Activated T-helper 2 cell treated with anti-CD3 and anti-CD28 coated beads, Interferon-gamma antibody, Interleukin-2, Interleukin-4, amounts not matched to agents 10 μg/mL and 5 μg/mL and 100 μg/mL, durations not matched to agents 14 hours and 24 hours and 36 hours (primary cell): ENCODE measurements at regions of chr5 and their contacts with region 1.

Region 1: DNA sequence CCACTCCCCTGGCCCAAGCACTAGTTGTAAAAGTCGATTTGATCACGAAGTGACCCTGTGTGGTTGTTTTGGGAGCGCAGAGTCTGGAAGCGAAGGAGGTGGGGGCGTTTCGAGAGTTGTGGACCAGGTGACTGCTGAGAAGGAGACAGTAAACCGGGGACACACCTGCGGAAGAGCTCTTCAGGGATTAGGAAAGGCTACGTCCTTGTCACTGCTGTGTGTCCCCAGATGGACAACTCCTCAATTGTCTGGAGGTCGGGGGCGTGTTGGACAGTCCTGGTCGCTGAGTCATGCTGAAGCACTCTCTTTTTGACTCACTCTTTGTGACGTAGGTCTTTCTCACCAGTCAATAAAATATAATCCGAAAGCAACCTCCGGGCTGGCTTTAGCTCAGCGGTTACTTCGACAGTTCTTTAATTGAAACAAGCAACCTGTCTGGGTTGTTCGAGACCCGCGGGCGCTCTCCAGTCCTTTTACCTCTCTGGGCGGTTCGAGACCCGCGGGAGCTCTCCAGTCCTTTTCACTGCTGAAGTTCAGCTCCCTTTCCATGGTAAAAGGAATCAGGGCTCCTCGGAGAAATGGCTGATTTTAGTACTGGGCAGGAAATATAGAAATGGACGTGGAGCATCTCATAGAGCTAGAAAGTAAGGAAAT is 10.8 kb downstream of the ZMAT2 start:
- DNase-seq: peak; percentile 88
- H3K4me3 Mint-ChIP-seq: peak overlapping the region; percentile 89
- H3K27ac Mint-ChIP-seq: peak overlapping the region; percentile 91
- H3K4me1 Mint-ChIP-seq: peaks cover 16% of the 10 kb centered on the region
- H3K27me3 Mint-ChIP-seq: no peaks in the 10 kb centered on the region

Region 2: DNA sequence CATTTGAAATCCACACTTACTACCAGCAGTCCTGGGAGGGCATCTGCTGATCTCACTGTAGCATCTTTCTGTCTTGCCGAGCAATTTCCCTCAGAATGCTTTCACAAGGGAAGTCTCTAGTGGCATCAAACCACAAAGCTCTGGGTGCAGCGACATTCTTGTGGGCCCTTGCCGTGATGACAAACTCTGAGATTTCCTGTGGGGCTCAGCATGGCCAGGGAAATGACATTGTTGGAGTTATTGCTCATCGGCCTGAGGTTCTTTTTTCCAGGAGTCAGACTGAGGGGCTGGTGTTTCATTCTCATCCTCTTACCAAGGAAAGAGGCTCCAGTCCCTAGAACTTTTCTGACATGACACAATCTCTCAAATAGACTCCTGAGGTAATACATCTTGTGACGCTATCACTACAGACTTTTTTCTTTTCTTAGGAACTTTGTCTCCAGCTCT is 459.5 kb before region 1 on chr5:
- intact Hi-C with region 1: loop called (anchors 5 kb)
- DNase-seq: peak; percentile 59
- H3K4me3 Mint-ChIP-seq: no peak overlapping the region
- H3K27ac Mint-ChIP-seq: peak overlapping the region; percentile 80
- H3K4me1 Mint-ChIP-seq: peaks cover 34% of the 10 kb centered on the region
- H3K27me3 Mint-ChIP-seq: no peaks in the 10 kb centered on the region

Region 3: GRCh38 chr5:140362860-140363630 is 348.0 kb before region 1 on chr5:
- intact Hi-C with region 1: loop called (anchors 5 kb)
- DNase-seq: peak; percentile 74
- H3K4me3 Mint-ChIP-seq: peak overlapping the region; percentile 67
- H3K27ac Mint-ChIP-seq: peak overlapping the region; percentile 24
- H3K4me1 Mint-ChIP-seq: peaks cover 6% of the 10 kb centered on the region
- H3K27me3 Mint-ChIP-seq: peaks cover 5% of the 10 kb centered on the region

Region 4: DNA sequence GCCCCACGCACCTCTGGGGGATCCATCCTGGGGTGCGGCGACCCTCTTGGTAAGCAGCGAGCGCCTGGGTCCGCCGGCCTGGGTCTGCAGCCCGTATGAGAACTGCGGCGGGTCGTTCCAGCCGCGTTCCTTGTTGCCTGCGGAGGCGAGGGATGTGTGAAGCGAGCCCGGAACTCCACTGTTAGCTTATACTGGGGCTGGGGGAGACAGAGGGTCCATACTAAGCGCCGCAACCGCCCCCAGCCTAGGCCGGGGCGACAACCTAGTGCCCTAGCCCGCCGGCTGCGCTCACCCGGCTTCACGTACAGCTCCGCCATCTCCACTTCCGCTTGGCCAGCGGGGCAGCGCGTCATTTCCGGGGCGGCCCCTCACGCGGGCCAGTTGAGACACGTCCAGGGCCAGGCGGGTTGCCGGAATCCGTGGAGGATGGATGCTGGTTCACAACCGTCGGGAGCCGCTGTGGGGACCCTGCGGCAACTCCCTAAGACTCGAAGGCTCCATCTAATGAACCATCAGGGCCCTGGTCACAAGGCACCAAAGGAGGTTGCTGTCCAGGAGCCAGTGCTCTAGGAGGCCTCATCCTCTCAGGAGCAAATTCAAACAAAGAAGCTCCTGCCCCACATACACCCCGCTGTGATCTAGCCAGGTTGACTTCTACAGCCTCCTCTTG is 153.8 kb before region 1 on chr5 and contains the start of gene SRA1:
- intact Hi-C with region 1: loop called (anchors 2 kb)
- DNase-seq: peak; percentile 84
- H3K4me3 Mint-ChIP-seq: peak within 1 kb of the TSS; percentile 83
- H3K27ac Mint-ChIP-seq: peak within 1 kb of the TSS; percentile 82
- H3K4me1 Mint-ChIP-seq: peaks cover 41% of the 10 kb centered on the region
- H3K27me3 Mint-ChIP-seq: no peaks in the 10 kb centered on the region
- total RNA-seq, gene SRA1: 45.9 and 48.2 TPM in 2 replicates

Region 5: GRCh38 chr5:140664359-140665119 is 46.5 kb before region 1 on chr5 and contains the start of gene WDR55:
- intact Hi-C with region 1: loop called (anchors 1 kb)
- DNase-seq: peak; percentile 94
- H3K4me3 Mint-ChIP-seq: peak within 1 kb of the TSS; percentile 99
- H3K27ac Mint-ChIP-seq: peak within 1 kb of the TSS; percentile 95
- H3K4me1 Mint-ChIP-seq: peaks cover 25% of the 10 kb centered on the region
- H3K27me3 Mint-ChIP-seq: no peaks in the 10 kb centered on the region
- total RNA-seq, gene WDR55: 39.1 and 40.0 TPM in 2 replicates

Region 6: GRCh38 chr5:140678993-140679392 is 32.0 kb before region 1 on chr5:
- intact Hi-C with region 1: no loop called
- DNase-seq: no peak
- H3K4me3 Mint-ChIP-seq: no peak overlapping the region
- H3K27ac Mint-ChIP-seq: no peak overlapping the region
- H3K4me1 Mint-ChIP-seq: peaks cover 4% of the 10 kb centered on the region
- H3K27me3 Mint-ChIP-seq: no peaks in the 10 kb centered on the region

Region 7: DNA sequence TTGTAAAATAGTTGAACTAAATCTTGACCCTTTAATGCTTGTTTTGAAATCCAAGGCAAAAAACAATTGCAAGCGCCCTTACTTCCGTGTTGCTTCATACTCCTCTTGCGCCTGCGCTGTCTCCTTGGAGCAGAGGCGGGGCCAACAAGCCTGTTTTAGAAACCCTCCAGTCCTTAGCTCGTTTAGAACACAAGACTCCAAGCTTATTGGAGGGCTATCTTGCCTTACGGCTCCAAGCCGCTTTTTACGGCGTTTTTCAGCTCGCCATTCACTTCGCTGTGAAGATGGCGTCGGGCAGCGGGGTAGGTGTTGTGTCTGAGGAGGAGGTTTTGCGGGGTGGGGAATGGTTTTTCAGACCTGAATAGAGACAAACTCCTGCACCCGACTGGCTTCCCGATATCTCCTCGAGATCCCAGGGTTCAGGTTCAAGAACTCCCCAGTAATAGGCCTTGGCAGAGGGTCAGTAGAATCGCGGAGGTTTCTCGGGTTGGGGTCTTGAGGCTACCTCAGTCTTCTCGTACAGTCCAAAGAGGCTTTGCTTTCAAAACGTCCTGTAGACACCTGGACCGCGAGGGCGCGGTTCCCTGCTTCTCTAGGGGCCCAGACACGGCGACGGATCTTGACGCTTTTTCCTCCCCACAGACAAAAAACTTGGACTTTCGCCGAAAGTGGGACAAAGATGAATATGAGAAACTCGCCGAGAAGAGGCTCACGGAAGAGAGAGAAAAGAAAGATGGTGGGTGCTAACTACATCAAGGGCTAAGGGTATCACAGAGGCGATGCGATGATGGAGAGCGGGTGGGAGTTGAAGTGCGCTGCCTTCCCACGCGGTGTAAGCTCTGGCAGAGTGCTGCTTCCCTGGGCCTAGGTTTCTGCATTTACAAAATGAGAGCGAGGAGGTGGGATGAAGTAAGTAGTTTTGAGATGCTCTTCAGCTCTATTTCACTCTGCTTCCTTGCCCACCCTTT is 10.6 kb before region 1 on chr5 and contains the start of gene ZMAT2:
- intact Hi-C with region 1: loop called (anchors 1 kb)
- DNase-seq: peak; percentile 92
- H3K4me3 Mint-ChIP-seq: peak within 1 kb of the TSS; percentile 93
- H3K27ac Mint-ChIP-seq: peak within 1 kb of the TSS; percentile 81
- H3K4me1 Mint-ChIP-seq: peaks cover 15% of the 10 kb centered on the region
- H3K27me3 Mint-ChIP-seq: no peaks in the 10 kb centered on the region
- total RNA-seq, gene ZMAT2: 53.4 and 53.9 TPM in 2 replicates

Region 8: DNA sequence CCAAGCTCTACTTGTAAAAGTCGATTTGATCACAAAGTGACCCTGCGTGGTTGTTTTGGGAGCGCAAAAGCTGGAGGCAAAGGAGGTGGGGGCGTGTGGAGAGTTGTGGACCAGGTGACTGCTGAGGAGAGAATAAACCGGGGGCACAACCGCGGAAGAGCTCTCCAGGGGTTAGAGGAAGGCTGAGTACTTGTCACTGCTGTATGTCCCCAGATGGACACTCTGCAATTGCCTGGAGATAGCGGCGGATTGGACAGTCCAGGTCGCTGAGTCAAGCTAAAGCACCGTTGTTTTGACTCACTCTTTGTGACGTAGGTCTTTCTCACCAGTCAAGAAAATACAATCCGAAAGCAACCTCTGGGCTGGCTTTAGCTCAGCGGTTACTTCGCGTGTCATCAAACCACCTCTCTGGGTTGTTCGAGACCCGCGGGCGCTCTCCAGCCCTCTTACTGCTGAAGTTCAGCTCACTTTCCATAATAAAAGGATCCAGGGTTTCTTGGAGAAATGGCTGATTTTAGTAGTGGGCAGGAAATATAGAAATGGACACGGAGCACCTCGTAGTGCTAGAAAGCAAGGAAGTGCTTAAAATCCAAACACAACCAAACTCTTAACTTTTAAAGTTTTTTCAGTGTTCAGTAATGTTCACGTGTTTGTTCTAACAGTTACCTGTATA is 14.9 kb after region 1 on chr5:
- intact Hi-C with region 1: loop called (anchors 1 kb)
- DNase-seq: peak; percentile 75
- H3K4me3 Mint-ChIP-seq: peak overlapping the region; percentile 76
- H3K27ac Mint-ChIP-seq: peak overlapping the region; percentile 61
- H3K4me1 Mint-ChIP-seq: peaks cover 5% of the 10 kb centered on the region
- H3K27me3 Mint-ChIP-seq: peaks cover 10% of the 10 kb centered on the region